A549 (cell line): ENCODE measurements at regions of chr20 and their contacts with region 1.

Region 1: GRCh38 chr20:38043512-38044300 is 10.2 kb downstream of the RPRD1B start:
- DNase-seq: peak; percentile 73 to 80
- ATAC-seq: peak; percentile 99 to 100
- H3K4me3 ChIP-seq: no peak overlapping the region
- H3K27ac ChIP-seq: peak overlapping the region in 1 of 2 experiments; percentile 41; a peak in 2 of 6 replicates
- H3K4me1 ChIP-seq: peaks cover 15% of the 10 kb centered on the region
- CTCF ChIP-seq: no peak
- EP300 ChIP-seq: no peak
- POLR2A ChIP-seq: no peak
- RAD21 ChIP-seq: no peak

Region 2: GRCh38 chr20:38033310-38034107 is 10.2 kb before region 1 on chr20 and contains the starts of genes RPRD1B and TTI1:
- CTCF ChIA-PET with region 1: interaction called, 9 read pairs
- POLR2A ChIA-PET with region 1: interaction called, 15 read pairs
- DNase-seq: peak; percentile 80 to 90
- ATAC-seq: peak; percentile 95 to 98
- H3K4me3 ChIP-seq: peak within 1 kb of the TSS; percentile 88
- H3K27ac ChIP-seq: peak within 1 kb of the TSS; percentile 91 to 95
- H3K4me1 ChIP-seq: peaks cover 25% of the 10 kb centered on the region; the same call in 2 of the 3 replicates
- CTCF ChIP-seq: no peak
- EP300 ChIP-seq: no peak
- POLR2A ChIP-seq: peak; percentile 56
- RAD21 ChIP-seq: no peak; a peak in 2 of 5 replicates
- polyA plus RNA-seq, gene RPRD1B: 26.7 and 28.4 TPM in 2 replicates
- polyA plus RNA-seq, gene TTI1: 27.9 and 30.6 TPM in 2 replicates